ENCODE measurements at regions of chr15 and their contacts with region 1.

Region 1: GRCh38 chr15:29747837-29748417 is 74.3 kb downstream of the TJP1 start:
- DNase-seq: no peak
- H3K4me3 Mint-ChIP-seq: no peak overlapping the region
- H3K27ac Mint-ChIP-seq: no peak overlapping the region
- H3K4me1 Mint-ChIP-seq: no peaks in the 10 kb centered on the region
- H3K27me3 Mint-ChIP-seq: peaks cover 7% of the 10 kb centered on the region

Region 2: DNA sequence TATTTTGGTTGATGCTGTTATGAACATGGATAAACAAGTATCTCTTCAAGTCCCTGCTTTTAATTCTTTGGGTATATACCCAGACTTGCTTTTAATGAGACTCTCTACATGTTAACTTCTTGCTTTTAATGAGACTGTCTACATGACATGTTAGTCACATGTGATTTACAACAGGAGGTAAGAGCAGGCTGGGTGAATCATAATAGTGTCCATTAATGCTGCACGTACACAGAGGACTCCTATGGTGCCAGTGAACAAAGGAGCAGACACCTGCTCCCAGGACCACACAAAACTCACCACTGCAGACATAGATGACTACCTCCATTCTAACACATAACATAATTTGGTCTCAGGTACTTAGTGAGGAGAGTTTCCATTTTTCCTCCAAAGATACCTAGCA is 204.9 kb before region 1 on chr15:
- CTCF ChIA-PET with region 1: no interaction called
- POLR2A ChIA-PET with region 1: no interaction called
- intact Hi-C with region 1: no loop called
- DNase-seq: no peak
- H3K4me3 Mint-ChIP-seq: no peak overlapping the region
- H3K27ac Mint-ChIP-seq: no peak overlapping the region
- H3K4me1 Mint-ChIP-seq: no peaks in the 10 kb centered on the region
- H3K27me3 Mint-ChIP-seq: peaks cover 8% of the 10 kb centered on the region

Region 3: GRCh38 chr15:29759596-29759995 is 11.7 kb after region 1 on chr15:
- CTCF ChIA-PET with region 1: no interaction called
- POLR2A ChIA-PET with region 1: no interaction called
- intact Hi-C with region 1: no loop called
- DNase-seq: no peak
- H3K4me3 Mint-ChIP-seq: no peak overlapping the region
- H3K27ac Mint-ChIP-seq: no peak overlapping the region
- H3K4me1 Mint-ChIP-seq: no peaks in the 10 kb centered on the region
- H3K27me3 Mint-ChIP-seq: peaks cover 9% of the 10 kb centered on the region

Region 4: DNA sequence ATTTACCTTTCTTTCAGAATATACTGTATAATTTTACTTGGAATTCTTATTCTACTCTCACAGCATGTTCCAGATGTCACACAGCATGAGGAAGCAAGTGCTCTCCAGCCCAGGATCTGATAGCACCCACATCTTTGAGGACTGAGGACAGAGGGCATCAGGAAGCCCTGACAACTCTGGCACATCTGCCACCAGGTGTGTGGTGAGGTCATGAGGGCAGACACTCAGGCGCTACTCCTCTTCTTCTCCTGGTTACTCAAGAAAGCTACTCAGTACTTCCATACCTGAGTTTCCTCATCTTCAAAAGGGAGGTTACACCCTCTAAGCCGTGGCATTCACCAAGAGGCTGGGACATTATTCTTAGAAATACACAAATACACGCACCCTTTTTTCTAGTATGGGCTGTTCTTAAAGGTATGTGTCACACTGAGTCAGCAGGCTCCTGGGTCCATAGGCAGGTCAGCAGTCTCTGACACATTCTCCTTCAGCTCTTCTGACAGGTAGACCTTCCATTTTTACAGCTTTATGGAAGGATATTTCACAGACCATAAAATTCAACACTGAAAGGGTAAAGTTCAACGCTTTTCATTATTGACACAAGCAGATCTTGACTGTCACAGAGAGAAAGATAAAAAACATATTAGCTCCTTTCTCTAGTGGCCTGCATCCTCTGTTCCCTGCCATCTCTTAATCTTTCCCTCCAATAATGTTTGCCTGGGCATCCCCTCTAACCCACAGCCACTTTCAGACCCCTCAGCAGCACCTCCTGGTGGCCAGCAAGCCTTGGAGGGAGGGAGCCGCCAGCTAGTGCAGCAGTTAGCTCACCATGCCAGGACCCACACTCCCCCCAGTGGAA is 177.5 kb after region 1 on chr15:
- CTCF ChIA-PET with region 1: interaction called, 3 read pairs
- POLR2A ChIA-PET with region 1: no interaction called
- intact Hi-C with region 1: loop called (anchors 5 kb)
- DNase-seq: peak; percentile 42
- H3K4me3 Mint-ChIP-seq: no peak overlapping the region
- H3K27ac Mint-ChIP-seq: no peak overlapping the region
- H3K4me1 Mint-ChIP-seq: no peaks in the 10 kb centered on the region
- H3K27me3 Mint-ChIP-seq: peaks cover 16% of the 10 kb centered on the region

Region 5: GRCh38 chr15:29988689-29989088 is 240.8 kb after region 1 on chr15:
- CTCF ChIA-PET with region 1: no interaction called
- POLR2A ChIA-PET with region 1: no interaction called
- intact Hi-C with region 1: no loop called
- DNase-seq: no peak
- H3K4me3 Mint-ChIP-seq: no peak overlapping the region
- H3K27ac Mint-ChIP-seq: no peak overlapping the region
- H3K4me1 Mint-ChIP-seq: no peaks in the 10 kb centered on the region
- H3K27me3 Mint-ChIP-seq: peaks cover 4% of the 10 kb centered on the region